Endothelial cell of umbilical vein (primary cell): ENCODE measurements at regions of chr9 and their contacts with region 1.

Region 1: GRCh38 chr9:74742792-74743730 is 144.7 kb downstream of the TRPM6 start:
- DNase-seq: peak; percentile 44
- H3K4me3 ChIP-seq: no peak overlapping the region
- H3K27ac ChIP-seq: no peak overlapping the region
- H3K4me1 ChIP-seq: no peaks in the 10 kb centered on the region
- H3K27me3 ChIP-seq: peaks cover 6 to 7% of the 10 kb centered on the region in 2 experiments
- CTCF ChIP-seq: peak; percentile 43 to 65
- POLR2A ChIP-seq: no peak

Region 2: DNA sequence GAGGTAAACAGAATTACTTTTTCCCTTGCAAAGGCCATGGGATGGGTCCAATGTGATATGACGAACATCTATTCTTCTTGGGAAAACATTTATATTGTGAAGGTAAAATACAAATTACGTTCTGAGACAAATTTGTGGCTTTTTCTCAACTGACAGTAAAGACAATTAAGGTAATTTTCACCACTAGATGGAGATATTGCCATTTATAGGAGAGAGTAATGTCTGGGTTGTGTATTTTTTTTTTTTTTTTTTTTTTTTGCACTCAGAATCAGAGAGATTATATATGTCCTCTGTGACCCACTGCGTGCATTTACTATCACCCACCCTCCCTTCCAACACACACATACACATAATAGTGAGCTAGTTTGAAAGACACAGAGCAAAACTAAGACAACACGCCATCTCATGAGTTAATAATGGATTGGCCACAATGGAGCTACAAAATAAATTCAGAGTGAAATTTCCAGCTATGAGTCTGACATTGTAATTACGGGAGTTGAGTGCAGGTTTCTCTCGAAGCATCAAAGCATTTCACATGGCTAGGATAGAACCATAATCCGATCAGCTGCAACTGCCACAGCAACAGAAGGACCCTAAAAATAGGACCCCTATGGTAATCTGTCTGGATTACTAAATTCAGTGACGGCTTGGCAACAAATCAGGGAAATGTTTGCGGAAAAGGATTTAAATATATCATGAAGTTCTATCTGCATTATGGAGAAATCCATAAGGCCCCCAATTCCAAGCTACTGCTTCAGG is 1542.2 kb before region 1 on chr9:
- CTCF ChIA-PET with region 1: interaction called, 21 read pairs
- POLR2A ChIA-PET with region 1: no interaction called
- dilution Hi-C with region 1: no loop called
- intact Hi-C with region 1: loop called (anchors 2 kb)
- DNase-seq: peak; percentile 39
- H3K4me3 ChIP-seq: no peak overlapping the region
- H3K27ac ChIP-seq: no peak overlapping the region
- H3K4me1 ChIP-seq: no peaks in the 10 kb centered on the region
- H3K27me3 ChIP-seq: peaks cover 4 to 10% of the 10 kb centered on the region in 2 experiments
- CTCF ChIP-seq: peak; percentile 37 to 40
- POLR2A ChIP-seq: no peak

Region 3: DNA sequence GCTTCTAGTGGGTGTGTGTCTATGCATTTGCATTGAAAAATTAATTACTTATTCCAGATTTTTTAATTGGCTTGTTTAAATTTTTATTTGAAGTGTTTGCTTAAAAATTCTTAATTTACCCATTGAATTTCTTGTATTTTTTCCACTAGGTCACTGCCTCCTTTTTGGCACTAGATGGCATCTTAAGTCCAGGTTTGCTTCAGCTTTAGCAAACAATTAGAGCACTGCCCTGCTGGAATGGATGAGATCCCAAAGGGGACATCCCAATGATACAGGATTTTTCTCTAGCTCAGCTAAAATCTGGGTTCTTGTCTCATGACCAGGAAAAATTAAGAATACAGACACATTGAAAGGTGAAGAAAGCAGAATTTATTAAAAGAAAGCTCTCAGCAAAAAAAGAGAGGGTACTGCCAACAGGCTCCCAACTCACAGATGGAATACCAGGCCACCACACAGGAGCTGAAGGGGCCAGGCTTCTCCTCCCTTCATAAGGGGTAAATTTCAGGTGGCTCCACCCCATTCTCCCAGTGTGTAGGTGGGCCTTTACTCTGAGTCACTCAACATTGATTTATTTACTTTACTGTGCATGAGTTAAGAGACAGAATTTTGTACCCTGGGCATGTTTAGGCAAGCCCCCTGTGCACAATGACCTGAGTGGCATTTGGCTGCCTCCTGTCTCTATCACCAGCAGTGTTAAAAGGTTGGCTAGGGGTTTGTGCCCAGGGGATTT is 1059.0 kb before region 1 on chr9:
- CTCF ChIA-PET with region 1: no interaction called
- POLR2A ChIA-PET with region 1: no interaction called
- dilution Hi-C with region 1: no loop called
- intact Hi-C with region 1: loop called (anchors 5 kb)
- DNase-seq: peak; percentile 16
- H3K4me3 ChIP-seq: no peak overlapping the region
- H3K27ac ChIP-seq: no peak overlapping the region
- H3K4me1 ChIP-seq: no peaks in the 10 kb centered on the region
- H3K27me3 ChIP-seq: no peaks in the 10 kb centered on the region
- CTCF ChIP-seq: peak; percentile 13 to 23
- POLR2A ChIP-seq: no peak

Region 4: GRCh38 chr9:74521009-74521408 is 222.1 kb before region 1 on chr9:
- CTCF ChIA-PET with region 1: no interaction called
- POLR2A ChIA-PET with region 1: no interaction called
- dilution Hi-C with region 1: no loop called
- intact Hi-C with region 1: no loop called
- DNase-seq: no peak
- H3K4me3 ChIP-seq: no peak overlapping the region
- H3K27ac ChIP-seq: no peak overlapping the region
- H3K4me1 ChIP-seq: no peaks in the 10 kb centered on the region
- H3K27me3 ChIP-seq: no peaks in the 10 kb centered on the region
- CTCF ChIP-seq: no peak
- POLR2A ChIP-seq: no peak

Region 5: GRCh38 chr9:74577956-74578355 is 165.1 kb before region 1 on chr9:
- CTCF ChIA-PET with region 1: no interaction called
- POLR2A ChIA-PET with region 1: no interaction called
- dilution Hi-C with region 1: no loop called
- intact Hi-C with region 1: loop called (anchors 5 kb)
- DNase-seq: peak; percentile 3
- H3K4me3 ChIP-seq: no peak overlapping the region
- H3K27ac ChIP-seq: no peak overlapping the region
- H3K4me1 ChIP-seq: no peaks in the 10 kb centered on the region
- H3K27me3 ChIP-seq: no peaks in the 10 kb centered on the region
- CTCF ChIP-seq: peak in 1 of 2 donors; percentile 25
- POLR2A ChIP-seq: no peak